IMR-90 (cell line): ENCODE measurements at regions of chr13 and their contacts with region 1.

Region 1: DNA sequence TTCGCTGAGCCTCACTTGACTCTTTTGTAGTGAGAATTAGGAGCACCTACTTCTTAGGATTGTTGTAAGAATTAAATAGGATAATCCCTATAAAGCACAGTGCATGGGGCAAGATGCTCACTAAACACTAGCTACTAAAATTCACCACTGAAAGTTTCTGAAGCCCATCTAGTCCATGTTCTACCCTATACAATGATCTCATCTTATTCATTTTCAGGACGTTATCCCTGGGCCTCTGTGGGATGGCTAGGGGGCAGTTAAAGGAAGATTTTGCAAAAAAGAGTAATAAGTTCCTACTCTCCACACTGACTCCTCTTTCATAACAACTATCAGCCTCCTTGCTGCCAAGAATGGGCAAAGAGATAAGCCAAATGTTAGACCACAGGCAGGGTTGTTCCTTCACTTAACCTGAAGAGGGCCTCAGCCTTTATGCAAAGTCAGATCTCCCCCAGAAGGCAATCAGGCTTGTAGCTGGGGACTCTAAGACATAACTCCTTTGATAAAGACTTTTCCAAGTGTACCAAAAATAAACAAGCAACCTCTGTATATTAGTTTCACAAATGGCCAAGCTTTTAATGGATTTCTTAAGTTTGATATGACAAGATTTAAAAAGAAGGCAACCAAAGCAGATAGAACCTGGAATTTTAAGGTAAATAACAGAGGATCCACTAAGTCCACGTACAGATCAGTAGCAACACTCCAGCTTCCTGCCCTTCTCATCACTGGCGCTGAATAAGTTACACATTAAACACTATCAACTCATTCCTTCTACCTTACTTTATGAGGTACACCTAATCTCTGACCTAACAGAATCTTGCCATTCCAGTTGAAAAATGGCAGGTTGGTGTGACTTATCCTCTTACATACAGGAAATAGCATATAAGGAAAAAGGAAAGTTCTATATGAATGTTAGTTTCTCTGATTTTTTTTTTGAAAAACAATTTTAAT is 44.4 kb downstream of the ELF1 start:
- DNase-seq: peak; percentile 66
- ATAC-seq: peak; percentile 94
- H3K4me3 ChIP-seq: no peak overlapping the region
- H3K27ac ChIP-seq: no peak overlapping the region
- H3K4me1 ChIP-seq: peaks cover 3% of the 10 kb centered on the region
- H3K27me3 ChIP-seq: no peaks in the 10 kb centered on the region
- CTCF ChIP-seq: peak; percentile 51
- POLR2A ChIP-seq: no peak
- RAD21 ChIP-seq: peak; percentile 46

Region 2: DNA sequence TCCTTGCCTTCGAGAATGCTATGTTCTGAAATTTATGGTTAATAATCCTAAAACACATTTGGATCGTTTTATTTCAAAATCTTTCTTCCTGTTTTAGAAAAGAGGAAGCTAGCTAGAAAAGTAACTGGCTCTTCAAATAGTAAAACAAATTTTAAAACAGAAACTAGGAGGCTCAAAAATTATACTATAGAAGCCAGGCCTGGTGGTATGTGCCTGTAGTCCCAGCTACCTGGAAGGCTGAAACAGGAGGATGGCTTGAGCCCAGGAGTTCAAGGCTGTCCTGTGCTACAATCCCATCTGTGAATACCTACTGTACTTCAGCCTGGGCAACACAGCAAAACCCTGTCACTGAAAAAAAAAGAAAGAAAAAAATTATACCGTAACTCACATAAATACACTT is 13.5 kb before region 1 on chr13:
- CTCF ChIA-PET with region 1: no interaction called
- POLR2A ChIA-PET with region 1: no interaction called
- dilution Hi-C with region 1: no loop called
- in situ Hi-C with region 1: no loop called
- intact Hi-C with region 1: no loop called
- DNase-seq: no peak
- ATAC-seq: no peak
- H3K4me3 ChIP-seq: no peak overlapping the region
- H3K27ac ChIP-seq: no peak overlapping the region
- H3K4me1 ChIP-seq: 0 out of 2 replicates have a peak, but pooled peaks cover 1% of the 10 kb centered on the region
- H3K27me3 ChIP-seq: no peaks in the 10 kb centered on the region
- CTCF ChIP-seq: no peak
- POLR2A ChIP-seq: no peak
- RAD21 ChIP-seq: no peak

Region 3: DNA sequence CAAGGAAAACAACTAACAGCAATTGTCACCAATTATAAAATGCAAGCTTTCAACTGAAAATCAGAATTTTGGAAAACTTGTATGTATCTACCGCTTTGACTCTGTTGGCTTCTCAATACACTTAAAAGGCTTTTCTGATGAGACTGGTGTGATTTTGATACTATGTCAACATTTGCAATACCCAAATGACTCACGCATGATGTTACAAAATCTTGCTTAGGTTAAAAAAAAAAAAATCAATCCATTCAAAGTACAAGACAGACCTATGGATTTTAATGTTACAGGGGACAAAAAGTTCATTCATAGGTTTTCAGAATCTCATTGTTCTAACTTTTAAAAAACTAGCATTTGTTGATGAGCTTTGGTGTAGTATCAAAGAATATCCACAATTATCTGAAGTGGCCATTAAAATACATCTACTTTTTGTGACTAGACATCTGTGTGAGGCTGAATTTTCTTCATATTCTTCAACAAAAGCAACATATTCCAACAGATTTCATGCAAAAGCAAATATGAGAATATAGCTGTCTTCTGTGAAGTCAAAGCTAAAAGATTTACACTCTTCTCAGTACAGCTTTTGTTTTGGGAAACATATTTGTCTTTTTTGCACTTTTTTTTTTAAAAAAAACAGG is 33.7 kb after region 1 on chr13:
- CTCF ChIA-PET with region 1: no interaction called
- POLR2A ChIA-PET with region 1: no interaction called
- dilution Hi-C with region 1: no loop called
- in situ Hi-C with region 1: no loop called
- intact Hi-C with region 1: no loop called
- DNase-seq: peak; percentile 90
- ATAC-seq: peak; percentile 59
- H3K4me3 ChIP-seq: no peak overlapping the region
- H3K27ac ChIP-seq: no peak overlapping the region
- H3K4me1 ChIP-seq: peaks cover 4% of the 10 kb centered on the region
- H3K27me3 ChIP-seq: no peaks in the 10 kb centered on the region
- CTCF ChIP-seq: no peak
- POLR2A ChIP-seq: no peak
- RAD21 ChIP-seq: no peak

Region 4: GRCh38 chr13:41061075-41061913 is 86.6 kb after region 1 on chr13 and contains the start of gene WBP4:
- CTCF ChIA-PET with region 1: interaction called, 3 read pairs
- POLR2A ChIA-PET with region 1: no interaction called
- dilution Hi-C with region 1: no loop called
- in situ Hi-C with region 1: no loop called
- intact Hi-C with region 1: loop called (anchors 5 kb)
- DNase-seq: peak; percentile 95
- ATAC-seq: peak; percentile 70
- H3K4me3 ChIP-seq: peak within 1 kb of the TSS; percentile 82
- H3K27ac ChIP-seq: peak within 1 kb of the TSS; percentile 93
- H3K4me1 ChIP-seq: peaks cover 6% of the 10 kb centered on the region
- H3K27me3 ChIP-seq: no peaks in the 10 kb centered on the region
- CTCF ChIP-seq: peak; percentile 20; the same call in 1 of the 2 replicates
- POLR2A ChIP-seq: peak; percentile 68; the same call in 1 of the 2 replicates
- RAD21 ChIP-seq: no peak; the same call in 1 of the 2 replicates
- total RNA-seq, gene WBP4: 4.3 and 11.4 TPM in 2 replicates